ENCODE measurements at regions of chr1 and their contacts with region 1.

Region 1: GRCh38 chr1:33314416-33314815 is 6.5 kb downstream of the A3GALT2 start:
- DNase-seq: no peak
- H3K4me3 ChIP-seq: no peak overlapping the region
- H3K4me3 Mint-ChIP-seq: no peak overlapping the region
- H3K27ac Mint-ChIP-seq: no peak overlapping the region
- H3K4me1 ChIP-seq: no peaks in the 10 kb centered on the region
- H3K4me1 Mint-ChIP-seq: no peaks in the 10 kb centered on the region
- H3K27me3 ChIP-seq: no peaks in the 10 kb centered on the region
- H3K27me3 Mint-ChIP-seq: peaks cover 5% of the 10 kb centered on the region
- CTCF ChIP-seq: no peak

Region 2: DNA sequence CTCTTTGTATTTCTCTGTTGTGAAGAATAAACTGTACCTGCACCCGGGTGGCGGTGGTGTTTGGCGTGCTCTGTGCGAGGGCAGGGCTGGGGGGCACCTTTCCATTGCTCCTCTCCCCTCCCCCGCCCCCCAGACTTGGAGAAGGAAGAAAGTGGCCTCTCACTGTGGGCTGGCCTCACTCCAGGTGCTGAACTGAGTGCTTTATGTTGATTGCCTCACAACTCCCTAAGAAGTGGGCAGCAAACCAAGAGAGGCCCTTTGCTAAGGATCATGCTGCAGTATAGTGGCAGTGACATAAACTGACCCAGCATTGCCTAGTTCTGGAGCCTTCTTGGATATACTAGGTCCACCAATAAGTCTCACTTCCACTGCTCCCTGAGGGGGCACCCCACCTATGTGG is 13.7 kb before region 1 on chr1:
- CTCF ChIA-PET with region 1: no interaction called
- POLR2A ChIA-PET with region 1: no interaction called
- intact Hi-C with region 1: no loop called
- DNase-seq: no peak
- H3K4me3 ChIP-seq: no peak overlapping the region
- H3K4me3 Mint-ChIP-seq: no peak overlapping the region
- H3K27ac Mint-ChIP-seq: no peak overlapping the region
- H3K4me1 ChIP-seq: no peaks in the 10 kb centered on the region
- H3K4me1 Mint-ChIP-seq: no peaks in the 10 kb centered on the region
- H3K27me3 ChIP-seq: no peaks in the 10 kb centered on the region
- H3K27me3 Mint-ChIP-seq: no peaks in the 10 kb centered on the region
- CTCF ChIP-seq: no peak

Region 3: DNA sequence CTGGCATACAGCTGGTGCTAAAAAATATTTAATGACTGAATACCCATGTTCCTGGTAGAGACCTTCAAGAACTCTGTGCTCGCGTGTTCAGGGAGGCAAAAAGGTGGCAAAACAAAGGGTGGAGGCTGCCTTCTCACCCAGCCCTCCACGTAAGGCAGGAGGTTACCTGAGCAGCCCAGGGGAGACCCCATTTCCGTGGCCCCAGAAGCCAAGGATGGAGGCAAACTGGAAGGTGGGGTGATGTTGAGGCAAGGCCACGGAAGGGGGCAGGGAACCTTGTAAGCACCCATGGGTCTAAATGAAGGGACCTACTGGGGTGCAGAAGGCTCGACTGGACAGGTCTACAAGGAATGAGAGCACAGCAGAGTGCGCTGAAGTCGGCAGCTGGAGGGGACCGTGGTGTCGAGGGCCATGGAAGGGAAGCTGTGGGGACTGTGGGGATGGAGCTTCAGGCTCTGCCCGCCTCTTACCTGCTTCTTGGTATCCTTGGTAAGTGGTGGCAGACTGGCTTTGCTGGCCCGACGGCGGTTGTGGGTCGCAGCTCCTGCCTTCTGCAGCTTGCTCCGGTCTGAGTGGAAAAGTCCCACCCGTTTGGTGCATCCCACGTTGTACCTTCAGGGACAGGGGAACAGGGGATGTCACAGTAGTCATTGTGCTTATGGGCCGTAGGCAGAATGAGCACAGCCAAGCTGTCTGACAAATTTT is 15.3 kb after region 1 on chr1:
- CTCF ChIA-PET with region 1: no interaction called
- POLR2A ChIA-PET with region 1: interaction called, 11 read pairs
- intact Hi-C with region 1: no loop called
- DNase-seq: no peak
- H3K4me3 ChIP-seq: no peak overlapping the region
- H3K4me3 Mint-ChIP-seq: no peak overlapping the region
- H3K27ac Mint-ChIP-seq: no peak overlapping the region
- H3K4me1 ChIP-seq: no peaks in the 10 kb centered on the region
- H3K4me1 Mint-ChIP-seq: no peaks in the 10 kb centered on the region
- H3K27me3 ChIP-seq: no peaks in the 10 kb centered on the region
- H3K27me3 Mint-ChIP-seq: no peaks in the 10 kb centered on the region
- CTCF ChIP-seq: no peak

Region 4: DNA sequence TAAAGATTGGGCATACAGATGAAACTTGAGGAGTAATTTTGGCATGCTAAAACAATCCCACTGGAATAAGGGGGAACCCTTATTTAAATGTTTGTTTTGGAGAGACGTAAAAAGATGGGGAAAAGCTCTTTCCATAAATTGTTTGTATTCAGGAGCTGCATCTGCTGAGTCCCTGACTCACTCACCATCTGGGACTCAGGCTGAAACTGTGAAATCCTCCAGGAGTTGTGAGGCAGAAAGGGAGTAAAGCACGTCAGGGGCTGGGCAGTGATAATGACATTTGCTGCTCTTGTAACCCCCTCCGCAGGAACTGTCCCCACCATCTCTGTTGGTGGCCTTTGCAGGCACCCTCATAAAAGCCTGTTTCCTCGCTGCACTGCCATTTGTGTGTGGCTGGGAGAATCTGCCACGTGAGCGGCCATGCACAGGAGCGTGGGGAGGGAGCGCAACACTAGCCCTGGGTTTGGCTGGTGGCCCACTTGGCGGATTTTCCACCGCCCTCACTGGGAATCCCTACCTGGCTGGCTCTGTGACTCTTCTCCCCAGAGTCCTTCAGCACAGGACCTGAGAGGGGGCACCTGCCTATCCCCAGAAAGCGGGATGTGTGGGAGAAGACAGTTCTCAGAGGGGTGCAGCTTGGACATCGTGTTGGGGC is 203.3 kb after region 1 on chr1:
- CTCF ChIA-PET with region 1: no interaction called
- POLR2A ChIA-PET with region 1: no interaction called
- intact Hi-C with region 1: no loop called
- DNase-seq: no peak
- H3K4me3 ChIP-seq: no peak overlapping the region
- H3K4me3 Mint-ChIP-seq: no peak overlapping the region
- H3K27ac Mint-ChIP-seq: no peak overlapping the region
- H3K4me1 ChIP-seq: no peaks in the 10 kb centered on the region
- H3K4me1 Mint-ChIP-seq: no peaks in the 10 kb centered on the region
- H3K27me3 ChIP-seq: no peaks in the 10 kb centered on the region
- H3K27me3 Mint-ChIP-seq: peaks cover 4% of the 10 kb centered on the region
- CTCF ChIP-seq: no peak

Region 5: GRCh38 chr1:33599516-33600115 is 285.2 kb after region 1 on chr1:
- CTCF ChIA-PET with region 1: no interaction called
- POLR2A ChIA-PET with region 1: no interaction called
- intact Hi-C with region 1: no loop called
- DNase-seq: no peak
- H3K4me3 ChIP-seq: no peak overlapping the region
- H3K4me3 Mint-ChIP-seq: no peak overlapping the region
- H3K27ac Mint-ChIP-seq: no peak overlapping the region
- H3K4me1 ChIP-seq: no peaks in the 10 kb centered on the region
- H3K4me1 Mint-ChIP-seq: no peaks in the 10 kb centered on the region
- H3K27me3 ChIP-seq: no peaks in the 10 kb centered on the region
- H3K27me3 Mint-ChIP-seq: peaks cover 11% of the 10 kb centered on the region
- CTCF ChIP-seq: no peak